ENCODE measurements at regions of chr17 and their contacts with region 1.

Region 1: GRCh38 chr17:77429919-77430752 is 289.4 kb downstream of the SEC14L1 start:
- DNase-seq: peak; percentile 76
- H3K4me3 ChIP-seq: no peak overlapping the region
- H3K27ac ChIP-seq: peak overlapping the region; percentile 4
- H3K4me1 ChIP-seq: peaks cover 53% of the 10 kb centered on the region
- H3K27me3 ChIP-seq: no peaks in the 10 kb centered on the region
- CTCF ChIP-seq: peak; percentile 66 to 81

Region 2: DNA sequence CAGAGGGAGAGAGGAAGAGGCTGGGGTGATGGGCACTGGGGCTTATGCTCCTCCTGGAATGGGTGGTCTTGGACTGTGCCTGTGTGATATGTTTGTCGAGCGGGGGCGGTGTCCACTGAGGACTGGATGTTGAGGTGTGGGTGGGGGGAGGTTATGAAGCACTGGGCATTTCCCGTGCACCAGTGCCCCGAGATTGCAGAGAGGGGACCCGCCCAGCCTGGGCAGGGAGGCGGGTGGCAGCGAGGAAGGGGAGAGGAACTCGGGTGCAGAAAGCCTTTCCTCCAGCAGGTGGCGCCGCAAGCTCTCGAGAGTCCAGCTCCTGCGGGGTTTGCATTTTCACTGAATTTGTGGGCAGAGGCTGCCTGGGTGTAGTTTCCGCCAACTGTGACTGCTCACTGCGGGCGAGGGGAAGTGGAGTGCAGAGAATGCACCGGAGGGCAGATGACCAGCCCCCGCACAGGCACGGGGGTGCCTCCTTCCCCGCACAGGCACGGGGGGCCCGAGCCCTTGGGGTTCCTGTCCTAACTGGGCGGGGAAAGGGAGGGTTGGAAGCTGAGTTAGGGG is 98.8 kb before region 1 on chr17:
- CTCF ChIA-PET with region 1: no interaction called
- dilution Hi-C with region 1: no loop called
- in situ Hi-C with region 1: loop called in 1 of 2 experiments (anchors 10 kb)
- intact Hi-C with region 1: loop called (anchors 1 kb)
- DNase-seq: peak; percentile 74
- H3K4me3 ChIP-seq: no peak overlapping the region
- H3K27ac ChIP-seq: peak overlapping the region; percentile 36
- H3K4me1 ChIP-seq: peaks cover 50% of the 10 kb centered on the region
- H3K27me3 ChIP-seq: no peaks in the 10 kb centered on the region
- CTCF ChIP-seq: peak; percentile 72 to 95

Region 3: GRCh38 chr17:77451245-77451893 is 21.2 kb after region 1 on chr17:
- CTCF ChIA-PET with region 1: no interaction called
- dilution Hi-C with region 1: no loop called
- in situ Hi-C with region 1: no loop called
- intact Hi-C with region 1: loop called (anchors 2 kb)
- DNase-seq: peak; percentile 60
- H3K4me3 ChIP-seq: peak overlapping the region; percentile 18 to 51 (median 47)
- H3K27ac ChIP-seq: peak overlapping the region; percentile 73
- H3K4me1 ChIP-seq: peaks cover 74% of the 10 kb centered on the region
- H3K27me3 ChIP-seq: no peaks in the 10 kb centered on the region
- CTCF ChIP-seq: no peak

Region 4: DNA sequence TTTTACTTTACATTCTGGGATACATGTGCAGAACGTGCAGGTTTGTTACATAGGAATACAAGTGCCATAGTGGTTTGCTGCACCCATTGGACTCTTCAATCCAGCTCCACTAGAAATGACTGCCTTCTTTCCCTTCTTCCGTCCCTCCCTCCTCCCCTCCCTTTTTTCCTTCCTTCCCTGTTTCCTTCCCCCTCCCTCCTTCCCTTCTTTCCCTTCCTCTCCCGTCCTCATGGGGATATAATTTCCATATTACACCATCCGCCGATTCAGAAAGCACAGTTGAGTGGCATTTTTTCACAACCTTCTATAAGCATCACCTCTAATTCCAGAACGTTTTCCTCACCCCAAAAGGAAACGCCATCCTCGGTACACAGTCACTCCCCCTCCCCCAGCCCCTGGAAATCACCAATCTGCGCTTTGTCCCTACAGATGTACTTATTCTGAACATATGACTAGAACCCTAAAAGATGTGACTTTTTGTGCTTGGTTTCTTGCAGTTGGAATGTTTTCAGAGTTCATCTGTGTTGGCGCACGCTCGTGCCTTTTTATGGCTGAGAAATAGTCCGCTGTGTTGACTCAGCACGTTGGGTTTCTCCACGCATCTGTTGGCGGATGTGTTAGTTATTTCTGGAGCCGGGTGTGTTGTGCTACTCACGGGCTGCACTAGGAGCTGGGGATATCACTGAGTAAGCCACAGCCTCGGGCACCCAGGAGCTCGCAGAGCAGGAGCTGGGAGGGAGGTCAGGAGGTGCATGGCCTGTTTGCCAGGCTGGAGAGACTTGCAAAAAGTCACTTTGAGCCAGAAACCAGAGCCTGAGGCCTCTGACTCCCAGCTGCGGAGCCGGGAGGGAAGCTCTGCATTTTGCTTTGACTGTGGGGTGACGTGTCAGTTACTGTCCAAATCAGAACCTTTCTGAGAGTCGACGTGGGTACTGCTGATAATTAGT is 47.1 kb after region 1 on chr17:
- CTCF ChIA-PET with region 1: no interaction called
- dilution Hi-C with region 1: no loop called
- in situ Hi-C with region 1: loop called in 1 of 2 experiments (anchors 5 kb)
- intact Hi-C with region 1: loop called (anchors 1 kb)
- DNase-seq: peak; percentile 98
- H3K4me3 ChIP-seq: no peak overlapping the region
- H3K27ac ChIP-seq: peak overlapping the region; percentile 87
- H3K4me1 ChIP-seq: peaks cover 82% of the 10 kb centered on the region
- H3K27me3 ChIP-seq: no peaks in the 10 kb centered on the region
- CTCF ChIP-seq: no peak

Region 5: GRCh38 chr17:77645072-77646045 is 215.2 kb after region 1 on chr17:
- CTCF ChIA-PET with region 1: no interaction called
- dilution Hi-C with region 1: no loop called
- in situ Hi-C with region 1: no loop called
- intact Hi-C with region 1: loop called (anchors 1 kb)
- DNase-seq: no peak
- H3K4me3 ChIP-seq: no peak overlapping the region
- H3K27ac ChIP-seq: no peak overlapping the region
- H3K4me1 ChIP-seq: no peaks in the 10 kb centered on the region
- H3K27me3 ChIP-seq: peaks cover 3% of the 10 kb centered on the region
- CTCF ChIP-seq: no peak

Measured in mammary epithelial cell (primary cell).